ENCODE measurements at regions of chr7 and their contacts with region 1.

Region 1: DNA sequence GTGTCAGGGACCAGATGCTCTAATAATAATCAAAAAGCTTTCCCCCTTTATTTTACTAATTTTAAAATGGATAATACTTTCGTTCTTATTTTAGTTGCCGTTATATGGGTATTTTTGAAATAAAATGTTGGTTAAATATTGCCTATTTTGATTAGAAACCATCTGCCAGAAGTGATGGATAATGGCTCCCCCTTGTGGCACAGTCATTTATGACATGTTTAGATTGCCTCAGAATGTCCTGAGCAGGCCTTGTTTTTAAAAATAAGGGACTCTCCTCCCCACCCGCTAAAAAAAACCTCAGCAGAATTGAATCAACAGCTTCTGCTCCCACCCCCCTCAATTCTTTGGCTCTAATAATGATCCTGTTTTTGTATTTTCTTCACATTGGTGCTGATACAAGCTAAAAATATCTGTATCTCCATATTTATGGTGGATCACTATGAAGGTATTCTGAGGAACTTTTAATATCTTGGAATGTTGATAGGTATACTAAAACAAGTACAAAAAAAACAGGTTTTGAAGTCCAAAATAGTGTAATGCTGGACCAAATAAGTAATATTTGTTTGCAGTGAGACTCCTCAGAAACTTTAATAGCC is 38.8 kb downstream of the TMEM60 start:
- DNase-seq: peak; percentile 52 to 79
- H3K4me3 ChIP-seq: no peak overlapping the region
- H3K4me3 Mint-ChIP-seq: no peak overlapping the region
- H3K27ac Mint-ChIP-seq: no peak overlapping the region
- H3K4me1 ChIP-seq: peaks cover 5% of the 10 kb centered on the region; the same call in 1 of the 2 replicates
- H3K4me1 Mint-ChIP-seq: peaks cover 6% of the 10 kb centered on the region
- H3K27me3 ChIP-seq: no peaks in the 10 kb centered on the region
- H3K27me3 Mint-ChIP-seq: no peaks in the 10 kb centered on the region
- CTCF ChIP-seq: peak; percentile 71 to 79

Region 2: DNA sequence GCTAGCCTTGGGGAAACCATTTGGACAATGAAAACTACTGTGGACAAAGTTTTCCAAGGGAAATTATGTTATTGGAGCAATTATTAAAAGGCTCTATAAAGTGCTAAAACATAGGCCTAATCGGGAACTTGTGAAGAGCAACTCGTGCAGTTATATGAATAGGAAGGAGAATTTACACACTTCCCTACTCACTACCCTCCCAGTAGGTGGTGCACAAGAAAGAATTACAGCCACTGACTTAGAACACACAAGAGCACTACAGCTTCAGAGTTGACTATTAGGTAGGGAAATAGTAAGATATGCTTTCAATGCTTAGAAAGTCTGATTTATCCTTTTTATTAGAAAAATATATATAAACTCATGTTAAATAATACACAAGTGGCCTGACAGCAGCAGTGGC is 390.4 kb before region 1 on chr7:
- CTCF ChIA-PET with region 1: no interaction called
- POLR2A ChIA-PET with region 1: no interaction called
- intact Hi-C with region 1: loop called (anchors 1 kb)
- DNase-seq: no peak
- H3K4me3 ChIP-seq: no peak overlapping the region
- H3K4me3 Mint-ChIP-seq: no peak overlapping the region
- H3K27ac Mint-ChIP-seq: no peak overlapping the region
- H3K4me1 ChIP-seq: no peaks in the 10 kb centered on the region
- H3K4me1 Mint-ChIP-seq: no peaks in the 10 kb centered on the region
- H3K27me3 ChIP-seq: no peaks in the 10 kb centered on the region
- H3K27me3 Mint-ChIP-seq: no peaks in the 10 kb centered on the region
- CTCF ChIP-seq: peak in 1 of 2 experiments; percentile 31

Region 3: DNA sequence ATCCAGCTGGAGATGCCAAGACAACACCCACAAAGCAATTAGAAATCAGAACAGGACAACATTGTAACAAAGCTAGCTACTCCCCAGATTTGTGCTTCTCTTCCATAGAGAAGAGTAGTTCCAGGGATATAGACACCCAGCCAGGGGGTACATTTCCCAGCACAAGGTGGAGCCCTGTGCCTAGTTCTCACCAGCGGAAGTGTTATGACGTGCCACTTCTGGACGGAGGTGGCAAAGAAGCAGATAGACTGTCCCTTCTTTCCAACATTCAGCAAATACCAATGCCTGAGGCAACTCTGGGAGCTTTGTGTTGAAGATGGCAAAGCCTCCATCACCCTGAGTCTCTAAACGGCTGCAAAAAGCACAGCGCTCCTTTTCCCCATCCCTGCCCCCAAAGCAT is 319.8 kb before region 1 on chr7:
- CTCF ChIA-PET with region 1: no interaction called
- POLR2A ChIA-PET with region 1: no interaction called
- intact Hi-C with region 1: loop called (anchors 1 kb)
- DNase-seq: peak; percentile 74 to 77
- H3K4me3 ChIP-seq: no peak overlapping the region
- H3K4me3 Mint-ChIP-seq: no peak overlapping the region
- H3K27ac Mint-ChIP-seq: no peak overlapping the region
- H3K4me1 ChIP-seq: 0 out of 2 replicates have a peak, but pooled peaks cover 4% of the 10 kb centered on the region
- H3K4me1 Mint-ChIP-seq: peaks cover 12% of the 10 kb centered on the region
- H3K27me3 ChIP-seq: no peaks in the 10 kb centered on the region
- H3K27me3 Mint-ChIP-seq: no peaks in the 10 kb centered on the region
- CTCF ChIP-seq: peak; percentile 64 to 65

Region 4: DNA sequence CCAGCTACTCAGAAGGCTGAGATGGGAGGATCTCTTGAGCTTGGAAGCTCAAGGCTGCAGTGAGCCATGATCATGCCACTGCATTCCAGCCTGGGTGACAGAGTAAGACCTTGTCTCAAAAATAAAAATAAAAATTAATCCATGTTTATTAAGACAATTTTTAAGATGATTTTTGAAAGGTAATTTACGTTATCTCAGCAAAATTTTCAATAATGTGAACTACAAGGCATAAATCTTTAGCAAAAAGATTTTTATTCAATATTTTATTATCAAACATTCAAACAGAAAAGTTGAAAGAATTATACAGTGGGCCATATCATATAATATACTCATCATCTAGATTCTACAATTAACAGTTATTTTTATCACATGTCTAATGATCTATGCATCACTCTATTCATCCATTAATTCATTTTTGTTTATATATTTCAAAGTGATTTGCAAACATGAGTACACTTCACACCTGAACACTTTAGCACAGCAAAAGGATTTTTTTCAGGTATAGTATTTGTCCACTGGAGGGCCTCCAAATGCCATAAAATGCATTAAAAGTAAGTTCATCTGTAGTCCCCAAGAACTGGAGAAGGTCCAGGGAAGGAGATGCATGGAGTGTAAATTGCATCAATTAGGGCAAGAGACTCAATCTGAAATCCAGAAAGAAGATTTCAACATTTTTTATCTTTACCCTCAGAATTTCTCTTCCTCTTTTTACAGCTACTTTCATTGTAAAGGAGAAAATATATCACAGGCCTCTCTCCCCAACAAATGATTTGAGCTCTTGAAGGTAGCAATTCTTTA is 101.8 kb before region 1 on chr7:
- CTCF ChIA-PET with region 1: interaction called, 3 read pairs
- POLR2A ChIA-PET with region 1: no interaction called
- intact Hi-C with region 1: loop called (anchors 1 kb)
- DNase-seq: peak in 1 of 2 experiments; percentile 59
- H3K4me3 ChIP-seq: no peak overlapping the region
- H3K4me3 Mint-ChIP-seq: no peak overlapping the region
- H3K27ac Mint-ChIP-seq: no peak overlapping the region
- H3K4me1 ChIP-seq: peaks cover 10% of the 10 kb centered on the region; the same call in 1 of the 2 replicates
- H3K4me1 Mint-ChIP-seq: peaks cover 18% of the 10 kb centered on the region
- H3K27me3 ChIP-seq: no peaks in the 10 kb centered on the region
- H3K27me3 Mint-ChIP-seq: no peaks in the 10 kb centered on the region
- CTCF ChIP-seq: peak; percentile 64 to 72